T-cell (primary cell): ENCODE measurements at regions of chr12 and their contacts with region 1.

Region 1: DNA sequence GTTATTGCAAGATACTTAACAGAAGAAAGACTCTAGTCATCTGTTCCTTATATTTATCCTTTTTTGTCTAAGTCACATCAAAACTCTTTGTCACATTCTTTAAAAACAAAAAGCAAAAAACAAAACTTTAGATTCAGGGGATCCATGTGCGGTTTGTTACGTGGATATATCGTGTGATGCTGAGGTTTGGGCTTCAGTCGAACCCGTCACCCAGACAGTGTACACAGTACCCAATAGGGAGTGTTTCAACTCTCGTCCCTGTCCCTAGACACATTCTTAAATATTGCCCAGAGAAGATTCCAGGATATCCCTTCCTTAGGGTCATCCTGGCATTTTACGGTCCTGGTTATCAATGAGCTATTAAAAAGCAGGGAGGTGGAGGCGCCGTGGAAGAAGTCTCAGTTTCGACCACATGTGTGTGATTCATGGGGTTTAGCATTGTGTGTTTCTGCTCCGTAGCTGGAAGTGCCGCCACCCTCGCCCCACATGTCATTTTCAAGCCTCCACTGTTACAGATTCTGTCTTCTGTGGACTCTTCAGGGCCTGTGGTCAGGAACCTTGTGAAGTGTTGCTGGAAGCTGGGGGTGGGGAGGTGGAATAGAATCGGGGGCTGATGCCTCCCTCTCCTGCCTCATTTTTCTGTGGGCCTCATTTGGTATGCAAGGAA is 19.9 kb downstream of the CCND2 start:
- DNase-seq: peak in 3 of 35 experiments; percentile 12 to 22 (median 17)
- ATAC-seq: peak; percentile 40 to 69 (median 58)
- H3K4me3 ChIP-seq: no peak overlapping the region
- H3K4me3 Mint-ChIP-seq: peak overlapping the region; percentile 49 to 67 (median 66)
- H3K27ac ChIP-seq: peak overlapping the region; percentile 48
- H3K27ac Mint-ChIP-seq: peak overlapping the region; percentile 95 to 99
- H3K4me1 ChIP-seq: peaks cover 9 to 62% of the 10 kb centered on the region in 2 experiments
- H3K4me1 Mint-ChIP-seq: peaks cover 60 to 80% (median 77%) of the 10 kb centered on the region in 3 donors
- H3K27me3 ChIP-seq: no peaks in the 10 kb centered on the region
- H3K27me3 Mint-ChIP-seq: no peaks in the 10 kb centered on the region

Region 2: DNA sequence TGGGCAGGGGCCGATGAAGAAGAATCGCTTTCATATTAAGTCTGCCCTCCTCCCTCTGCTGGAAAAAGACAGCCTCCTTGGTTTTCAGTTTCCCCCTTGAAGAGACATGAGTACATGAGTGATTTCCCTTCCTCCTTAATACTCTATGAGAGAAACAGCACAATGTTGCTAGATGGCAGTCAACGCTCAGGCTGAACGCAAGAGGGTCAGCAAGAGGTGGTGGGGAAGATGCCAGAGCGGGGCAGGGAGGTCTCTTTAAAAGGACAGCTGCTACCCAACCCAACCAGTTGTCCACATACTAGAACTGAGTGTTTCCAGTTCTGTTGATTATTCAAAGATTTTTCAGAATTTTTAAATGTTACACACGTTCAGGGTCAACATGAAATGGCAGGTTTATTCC is 563.3 kb before region 1 on chr12:
- CTCF ChIA-PET with region 1: interaction called in 1 of 2 experiments, 11 read pairs
- POLR2A ChIA-PET with region 1: no interaction called
- DNase-seq: no peak
- ATAC-seq: no peak
- H3K4me3 ChIP-seq: no peak overlapping the region
- H3K4me3 Mint-ChIP-seq: no peak overlapping the region
- H3K27ac ChIP-seq: no peak overlapping the region
- H3K27ac Mint-ChIP-seq: peak overlapping the region; percentile 3 to 7
- H3K4me1 ChIP-seq: peaks cover 16 to 28% of the 10 kb centered on the region in 2 experiments
- H3K4me1 Mint-ChIP-seq: peaks cover 34 to 48% (median 41%) of the 10 kb centered on the region in 3 donors
- H3K27me3 ChIP-seq: no peaks in the 10 kb centered on the region
- H3K27me3 Mint-ChIP-seq: no peaks in the 10 kb centered on the region

Region 3: DNA sequence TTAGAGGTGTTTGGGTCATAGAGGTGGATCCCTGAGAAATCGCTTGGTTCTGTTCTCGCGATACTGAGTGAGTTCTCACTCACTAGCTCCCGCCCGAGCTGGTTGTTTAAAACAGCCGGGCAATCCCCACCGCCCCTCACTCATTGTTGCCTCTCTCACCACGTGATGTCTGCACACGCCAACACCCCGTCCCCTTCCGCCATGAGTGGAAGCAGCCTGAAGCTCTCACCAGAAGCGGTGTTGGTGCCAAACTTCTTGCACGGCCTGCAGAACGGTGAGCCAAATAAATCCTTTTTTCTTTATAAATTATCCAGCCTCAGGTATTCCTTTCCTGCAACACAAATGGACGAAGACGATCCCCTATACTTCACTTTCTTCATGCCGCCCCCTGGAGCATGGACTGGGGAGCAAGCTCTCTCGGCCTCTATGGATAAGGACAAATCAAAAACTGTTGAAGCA is 65.3 kb before region 1 on chr12:
- CTCF ChIA-PET with region 1: no interaction called
- POLR2A ChIA-PET with region 1: interaction called in 1 of 2 experiments, 11 read pairs
- DNase-seq: no peak
- ATAC-seq: no peak
- H3K4me3 ChIP-seq: no peak overlapping the region
- H3K4me3 Mint-ChIP-seq: no peak overlapping the region
- H3K27ac ChIP-seq: no peak overlapping the region
- H3K27ac Mint-ChIP-seq: no peak overlapping the region
- H3K4me1 ChIP-seq: peaks cover 2 to 6% of the 10 kb centered on the region in 2 experiments
- H3K4me1 Mint-ChIP-seq: peaks cover 0 to 10% (median 6%) of the 10 kb centered on the region in 3 donors
- H3K27me3 ChIP-seq: peaks cover 0 to 3% of the 10 kb centered on the region in 2 experiments
- H3K27me3 Mint-ChIP-seq: peaks cover 0 to 3% of the 10 kb centered on the region in 2 donors